Naive thymus-derived CD4-positive, alpha-beta T cell (primary cell): ENCODE measurements at regions of chr4 and their contacts with region 1.

Region 1: DNA sequence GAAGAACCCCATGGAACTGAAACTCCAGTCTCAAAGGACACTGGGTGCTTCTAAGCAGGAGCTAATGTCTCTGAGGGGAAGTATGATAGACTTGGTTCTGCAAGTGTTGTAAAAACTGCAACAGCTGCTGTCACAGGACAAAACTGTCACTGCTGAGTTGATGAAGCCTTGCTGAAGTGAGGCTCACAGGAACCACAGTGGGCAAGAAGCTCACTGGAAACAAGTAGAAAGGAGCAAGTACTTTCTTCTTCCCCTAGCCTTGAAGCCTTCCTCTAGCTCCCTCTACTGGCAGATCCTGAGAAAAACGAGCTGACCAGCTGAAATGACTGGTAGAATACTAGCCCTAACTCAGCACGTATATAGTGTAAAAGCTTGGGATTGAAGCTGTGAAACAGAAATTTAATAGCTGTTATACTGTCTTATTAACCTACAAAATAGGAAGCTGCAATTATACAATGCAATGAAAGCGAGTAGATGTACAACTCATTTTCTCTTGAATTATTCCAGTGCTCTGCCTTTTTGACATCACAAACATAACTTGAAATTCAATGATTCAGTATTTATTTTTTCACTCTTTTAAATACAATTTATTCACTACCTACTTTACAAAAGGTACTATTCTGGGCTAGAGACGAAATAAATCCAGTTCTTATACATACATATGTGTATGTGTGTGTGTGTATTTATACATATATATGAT is 91.4 kb downstream of the GABRB1 start:
- DNase-seq: peak in 5 of 9 donors; percentile 14 to 42 (median 24)
- ATAC-seq: peak; percentile 67
- H3K4me3 ChIP-seq: no peak overlapping the region
- H3K4me3 Mint-ChIP-seq: no peak overlapping the region
- H3K27ac ChIP-seq: no peak overlapping the region
- H3K27ac Mint-ChIP-seq: no peak overlapping the region
- H3K4me1 ChIP-seq: no peaks in the 10 kb centered on the region
- H3K4me1 Mint-ChIP-seq: no peaks in the 10 kb centered on the region
- H3K27me3 ChIP-seq: peaks cover 0 to 2% of the 10 kb centered on the region in 2 donors
- H3K27me3 Mint-ChIP-seq: peaks cover 0 to 18% (median 10%) of the 10 kb centered on the region in 5 donors

Region 2: DNA sequence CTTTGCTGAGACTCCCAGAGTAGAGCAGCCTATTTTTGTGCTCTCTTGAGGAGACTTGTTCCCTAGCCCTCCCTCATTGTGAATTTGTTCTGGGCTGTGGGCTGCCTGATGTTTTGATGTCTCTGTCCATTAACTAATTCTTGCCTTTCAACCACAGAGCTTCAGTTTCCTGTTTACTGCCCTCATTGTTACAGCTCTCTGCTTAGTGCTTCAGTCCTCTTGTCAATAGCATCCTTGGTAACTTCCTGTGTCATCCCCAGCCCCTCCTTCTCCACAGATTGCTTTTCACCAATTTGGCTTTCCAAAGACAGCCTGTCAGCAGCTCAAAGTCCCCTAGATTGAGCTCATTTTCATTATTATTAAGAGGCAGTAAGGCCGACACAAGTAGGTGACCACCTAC is 283.6 kb before region 1 on chr4:
- CTCF ChIA-PET with region 1: no interaction called
- POLR2A ChIA-PET with region 1: no interaction called
- intact Hi-C with region 1: loop called (anchors 1 to 10 kb)
- DNase-seq: no peak
- ATAC-seq: peak; percentile 41
- H3K4me3 ChIP-seq: no peak overlapping the region
- H3K4me3 Mint-ChIP-seq: peak overlapping the region in 1 of 10 donors; percentile 14
- H3K27ac ChIP-seq: no peak overlapping the region
- H3K27ac Mint-ChIP-seq: no peak overlapping the region
- H3K4me1 ChIP-seq: no peaks in the 10 kb centered on the region
- H3K4me1 Mint-ChIP-seq: peaks cover 0 to 5% (median 0%) of the 10 kb centered on the region in 7 donors
- H3K27me3 ChIP-seq: no peaks in the 10 kb centered on the region
- H3K27me3 Mint-ChIP-seq: peaks cover 0 to 7% (median 0%) of the 10 kb centered on the region in 5 donors

Region 3: GRCh38 chr4:46844325-46844917 is 278.3 kb before region 1 on chr4:
- CTCF ChIA-PET with region 1: no interaction called
- POLR2A ChIA-PET with region 1: no interaction called
- intact Hi-C with region 1: loop called (anchors 1 to 10 kb)
- DNase-seq: peak in 6 of 9 donors; percentile 1 to 24 (median 9)
- ATAC-seq: peak; percentile 61
- H3K4me3 ChIP-seq: no peak overlapping the region
- H3K4me3 Mint-ChIP-seq: no peak overlapping the region
- H3K27ac ChIP-seq: no peak overlapping the region
- H3K27ac Mint-ChIP-seq: no peak overlapping the region
- H3K4me1 ChIP-seq: no peaks in the 10 kb centered on the region
- H3K4me1 Mint-ChIP-seq: peaks cover 0 to 2% (median 0%) of the 10 kb centered on the region in 7 donors
- H3K27me3 ChIP-seq: no peaks in the 10 kb centered on the region
- H3K27me3 Mint-ChIP-seq: peaks cover 0 to 11% (median 5%) of the 10 kb centered on the region in 5 donors

Region 4: DNA sequence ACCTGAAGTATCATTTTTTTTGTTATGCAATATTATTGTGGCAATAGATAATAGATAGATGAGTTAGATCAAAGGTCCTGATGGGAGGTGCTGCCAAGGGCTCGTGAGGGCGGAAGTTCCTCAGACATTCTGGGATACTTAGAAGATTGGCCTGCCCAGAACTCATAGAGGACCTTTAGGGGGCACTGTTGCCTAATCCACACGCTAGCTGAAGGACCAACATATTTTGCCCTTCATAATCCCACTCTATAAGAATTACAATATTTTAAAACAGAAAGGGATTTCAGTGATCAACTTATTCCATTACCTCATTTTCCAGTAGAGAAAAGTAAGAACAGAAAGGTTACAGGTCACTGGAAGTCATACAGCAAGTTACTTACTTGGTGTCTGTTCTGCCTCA is 190.8 kb before region 1 on chr4:
- CTCF ChIA-PET with region 1: no interaction called
- POLR2A ChIA-PET with region 1: no interaction called
- intact Hi-C with region 1: loop called in 1 of 2 experiments (anchors 1 kb)
- DNase-seq: peak in 1 of 9 donors; percentile 2
- ATAC-seq: no peak
- H3K4me3 ChIP-seq: no peak overlapping the region
- H3K4me3 Mint-ChIP-seq: no peak overlapping the region
- H3K27ac ChIP-seq: no peak overlapping the region
- H3K27ac Mint-ChIP-seq: no peak overlapping the region
- H3K4me1 ChIP-seq: no peaks in the 10 kb centered on the region
- H3K4me1 Mint-ChIP-seq: no peaks in the 10 kb centered on the region
- H3K27me3 ChIP-seq: peaks cover 0 to 2% of the 10 kb centered on the region in 2 donors
- H3K27me3 Mint-ChIP-seq: peaks cover 0 to 15% (median 4%) of the 10 kb centered on the region in 5 donors

Region 5: DNA sequence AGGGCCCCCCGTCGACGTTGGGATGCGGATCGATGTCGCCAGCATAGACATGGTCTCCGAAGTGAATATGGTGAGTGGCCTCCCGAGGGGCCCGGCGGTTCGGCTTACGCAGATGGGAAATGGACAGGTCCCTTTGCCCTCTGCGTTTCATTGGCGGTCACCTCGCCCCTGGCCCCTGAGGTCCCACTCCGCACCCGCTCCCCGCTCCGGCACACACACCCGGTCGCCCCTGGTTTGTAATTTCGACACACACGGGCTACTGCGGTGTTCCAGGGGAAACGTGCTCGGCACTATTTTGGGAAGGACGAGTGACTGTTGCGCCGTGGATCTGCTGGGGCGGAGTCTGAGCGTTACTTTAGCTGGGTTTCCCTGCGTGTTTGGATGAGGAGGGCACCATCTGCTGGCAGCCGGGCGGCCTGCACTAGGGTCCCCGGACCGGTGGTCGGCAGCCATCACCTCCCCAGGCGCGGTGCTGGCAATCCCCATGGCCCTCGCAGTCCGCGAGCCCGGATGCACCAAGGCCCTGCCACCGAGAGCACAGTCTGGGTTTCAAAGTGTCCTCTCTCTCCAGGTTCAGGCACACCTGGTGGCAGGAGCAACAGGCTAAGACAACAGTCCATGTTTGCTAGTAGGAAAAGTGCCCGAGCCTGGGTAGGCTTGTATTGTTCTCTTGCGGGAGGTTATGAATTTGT is 90.2 kb before region 1 on chr4:
- CTCF ChIA-PET with region 1: no interaction called
- POLR2A ChIA-PET with region 1: no interaction called
- intact Hi-C with region 1: loop called in 1 of 2 experiments (anchors 5 kb)
- DNase-seq: peak in 3 of 9 donors; percentile 13 to 27 (median 17)
- ATAC-seq: peak; percentile 72
- H3K4me3 ChIP-seq: peak overlapping the region; percentile 32
- H3K4me3 Mint-ChIP-seq: peak overlapping the region; percentile 47 to 79 (median 73)
- H3K27ac ChIP-seq: no peak overlapping the region
- H3K27ac Mint-ChIP-seq: no peak overlapping the region
- H3K4me1 ChIP-seq: peaks cover 5 to 12% of the 10 kb centered on the region in 2 donors
- H3K4me1 Mint-ChIP-seq: peaks cover 12 to 21% (median 17%) of the 10 kb centered on the region in 7 donors
- H3K27me3 ChIP-seq: peaks cover 0 to 14% of the 10 kb centered on the region in 2 donors
- H3K27me3 Mint-ChIP-seq: peaks cover 48 to 65% (median 59%) of the 10 kb centered on the region in 5 donors

Region 6: DNA sequence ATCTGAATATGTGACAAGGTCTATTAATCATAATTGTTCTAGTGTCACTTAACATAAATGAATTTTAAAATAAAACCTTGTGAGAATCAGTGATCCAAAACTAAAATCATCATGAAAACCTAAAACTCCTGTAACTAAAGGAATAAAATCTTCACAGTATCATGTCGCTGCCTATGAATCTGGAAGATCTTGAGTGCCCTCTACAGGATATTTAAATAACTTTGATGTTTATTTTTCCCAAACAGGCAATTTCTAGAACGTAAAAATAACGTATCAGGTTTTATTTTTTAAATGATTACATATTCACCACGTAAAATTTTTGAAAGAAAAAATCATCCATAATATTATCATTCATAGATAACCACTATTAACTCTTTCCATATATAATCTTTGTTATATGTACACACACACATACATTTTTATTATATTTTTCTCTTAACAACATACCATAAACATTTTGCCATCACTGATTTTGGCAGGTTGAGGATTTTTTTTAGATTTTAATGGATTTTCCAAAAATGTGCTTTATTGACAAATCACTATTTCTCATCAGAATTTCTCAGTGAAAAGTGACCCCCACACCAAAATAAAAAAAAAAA is 261.2 kb after region 1 on chr4:
- CTCF ChIA-PET with region 1: no interaction called
- POLR2A ChIA-PET with region 1: no interaction called
- intact Hi-C with region 1: loop called in 1 of 2 experiments (anchors 5 kb)
- DNase-seq: peak in 5 of 9 donors; percentile 1 to 19 (median 11)
- ATAC-seq: no peak
- H3K4me3 ChIP-seq: no peak overlapping the region
- H3K4me3 Mint-ChIP-seq: no peak overlapping the region
- H3K27ac ChIP-seq: no peak overlapping the region
- H3K27ac Mint-ChIP-seq: no peak overlapping the region
- H3K4me1 ChIP-seq: no peaks in the 10 kb centered on the region
- H3K4me1 Mint-ChIP-seq: peaks cover 0 to 4% (median 0%) of the 10 kb centered on the region in 7 donors
- H3K27me3 ChIP-seq: no peaks in the 10 kb centered on the region
- H3K27me3 Mint-ChIP-seq: peaks cover 5 to 32% (median 17%) of the 10 kb centered on the region in 5 donors